Activated T-helper 2 cell treated with anti-CD3 and anti-CD28 coated beads, Interferon-gamma antibody, Interleukin-2, Interleukin-4, amounts not matched to agents 10 μg/mL and 5 μg/mL and 100 μg/mL, durations not matched to agents 14 hours and 24 hours and 36 hours (primary cell): ENCODE measurements at regions of chr3 and their contacts with region 1.

Region 1: GRCh38 chr3:149245738-149246451 is 24.3 kb upstream of the CP start:
- DNase-seq: no peak
- H3K4me3 Mint-ChIP-seq: no peak overlapping the region
- H3K27ac Mint-ChIP-seq: peak overlapping the region; percentile 21
- H3K4me1 Mint-ChIP-seq: peaks cover 39% of the 10 kb centered on the region
- H3K27me3 Mint-ChIP-seq: peaks cover 7% of the 10 kb centered on the region

Region 2: DNA sequence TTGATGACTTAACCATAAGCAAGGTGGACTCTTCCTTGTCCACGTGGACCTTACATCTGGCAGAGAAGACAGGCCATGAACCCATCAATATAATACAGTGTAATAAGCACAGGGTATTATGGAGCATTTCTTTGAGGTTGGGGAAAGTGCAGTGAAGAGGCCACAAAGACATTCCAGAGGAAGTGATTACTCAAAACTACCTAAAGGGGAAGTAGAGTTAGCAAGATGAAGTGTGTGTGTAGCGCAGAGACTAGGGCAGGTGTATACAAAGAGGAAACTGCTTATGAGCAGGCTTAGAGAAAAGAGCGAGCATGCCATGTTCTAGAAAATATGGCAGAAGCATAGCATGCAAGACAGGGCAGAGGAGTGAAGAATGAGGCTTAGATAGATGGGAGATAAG is 42.1 kb before region 1 on chr3:
- intact Hi-C with region 1: loop called (anchors 1 kb)
- DNase-seq: no peak
- H3K4me3 Mint-ChIP-seq: no peak overlapping the region
- H3K27ac Mint-ChIP-seq: no peak overlapping the region
- H3K4me1 Mint-ChIP-seq: peaks cover 18% of the 10 kb centered on the region
- H3K27me3 Mint-ChIP-seq: peaks cover 41% of the 10 kb centered on the region